ENCODE measurements at regions of chr2 and their contacts with region 1.

Region 1: DNA sequence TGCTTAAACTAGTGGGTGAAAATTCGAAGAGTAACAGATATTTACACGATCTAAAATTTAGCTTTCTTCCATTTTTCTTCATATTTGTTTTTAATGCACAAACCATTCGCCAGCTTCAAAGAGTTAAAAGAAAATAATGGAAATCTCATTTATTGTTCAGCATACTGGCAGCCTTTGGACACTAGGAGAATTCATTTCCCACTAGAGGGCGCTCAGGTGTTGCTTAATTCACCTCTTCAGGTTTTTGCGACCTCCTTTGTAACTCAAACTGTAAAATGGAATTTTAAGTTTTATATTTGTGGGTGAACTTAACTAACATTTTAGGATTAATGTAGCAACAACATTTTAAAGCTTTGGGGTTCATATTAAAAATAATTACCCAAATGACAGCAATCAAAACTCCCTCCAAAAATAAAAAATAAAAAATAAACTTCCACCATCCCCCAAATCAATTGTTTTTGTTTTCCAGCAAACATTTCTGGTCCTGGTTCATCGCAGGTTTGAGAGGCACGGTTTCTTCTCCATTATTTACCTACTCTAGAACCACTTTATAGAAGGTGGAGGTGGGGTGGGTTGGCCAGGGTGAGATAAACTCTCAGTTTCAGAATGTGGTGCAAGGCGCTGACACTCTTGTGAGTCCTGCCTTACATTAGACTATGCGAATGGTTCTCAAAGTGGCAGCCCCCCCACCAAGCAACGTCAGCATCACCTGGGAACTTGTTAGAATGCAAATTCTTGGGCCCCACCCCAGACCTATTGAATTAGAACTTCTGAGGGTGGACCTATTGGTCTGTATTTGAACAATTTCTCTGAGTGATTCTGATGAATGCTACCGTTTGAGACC is 24.7 kb upstream of the PNPT1 start:
- DNase-seq: peak; percentile 59 to 71 (median 68)
- ATAC-seq: no peak
- H3K4me3 ChIP-seq: no peak overlapping the region
- H3K27ac ChIP-seq: no peak overlapping the region
- H3K4me1 ChIP-seq: no peaks in the 10 kb centered on the region
- H3K27me3 ChIP-seq: no peaks in the 10 kb centered on the region
- CTCF ChIP-seq: peak; percentile 32 to 88 (median 77)
- POLR2A ChIP-seq: no peak

Region 2: DNA sequence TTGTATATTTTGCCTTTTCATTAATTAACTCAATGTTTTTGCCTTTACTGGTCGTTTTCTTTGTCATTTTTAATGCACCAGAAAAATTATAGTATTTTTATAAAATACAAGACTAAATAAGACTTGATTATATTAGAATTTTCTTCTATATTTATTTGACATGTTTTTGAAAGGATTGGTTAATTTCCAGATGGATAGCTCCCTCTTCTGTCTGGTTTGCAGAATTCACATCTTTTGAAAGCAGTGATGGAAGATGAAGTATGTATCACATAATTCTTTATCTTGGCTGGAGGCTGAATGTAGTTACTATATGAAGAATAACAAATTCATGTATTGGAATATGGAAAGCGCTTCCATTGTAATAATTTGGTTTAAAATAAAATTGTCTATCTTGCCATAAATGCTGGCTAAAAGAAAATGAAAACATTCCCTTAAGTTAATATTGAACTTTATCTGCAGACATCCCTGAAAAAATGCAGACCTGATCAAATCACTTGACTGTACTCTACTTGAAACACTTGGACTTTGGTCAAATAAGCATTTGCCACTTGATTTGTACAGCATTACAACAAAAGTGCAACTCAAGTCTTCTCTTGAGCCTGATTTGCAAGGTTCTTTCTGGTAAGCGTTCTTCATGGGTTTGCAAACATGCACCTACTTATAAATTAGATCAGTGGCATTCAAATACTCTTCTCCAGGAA is 291.5 kb after region 1 on chr2:
- intact Hi-C with region 1: loop called (anchors 10 kb)
- DNase-seq: no peak
- ATAC-seq: no peak
- H3K4me3 ChIP-seq: no peak overlapping the region
- H3K27ac ChIP-seq: no peak overlapping the region
- H3K4me1 ChIP-seq: peaks cover 16% of the 10 kb centered on the region
- H3K27me3 ChIP-seq: no peaks in the 10 kb centered on the region
- CTCF ChIP-seq: peak in 6 of 7 experiments; percentile 43 to 60 (median 54)
- POLR2A ChIP-seq: no peak

Region 3: DNA sequence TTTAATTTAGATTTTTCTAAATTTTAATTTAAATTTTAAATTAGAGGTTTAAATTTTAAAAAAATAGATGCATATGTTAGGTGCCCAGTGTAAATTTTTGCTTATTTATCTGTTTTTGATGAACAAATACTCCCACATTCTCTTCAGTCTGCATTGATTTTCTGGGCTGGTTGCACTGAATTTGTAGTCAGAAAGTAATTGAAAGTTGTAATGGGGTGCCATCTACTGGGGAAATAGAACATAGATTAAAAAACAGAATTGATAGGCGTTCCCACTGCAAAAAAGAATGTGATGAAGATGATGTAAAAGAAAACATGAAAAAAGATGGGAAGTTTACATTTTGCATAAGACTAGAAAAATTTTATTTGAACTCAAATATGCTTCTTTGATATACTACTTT is 413.8 kb after region 1 on chr2:
- intact Hi-C with region 1: loop called (anchors 10 kb)
- DNase-seq: no peak
- ATAC-seq: peak; percentile 45
- H3K4me3 ChIP-seq: no peak overlapping the region
- H3K27ac ChIP-seq: no peak overlapping the region
- H3K4me1 ChIP-seq: no peaks in the 10 kb centered on the region
- H3K27me3 ChIP-seq: no peaks in the 10 kb centered on the region
- CTCF ChIP-seq: peak; percentile 40 to 83 (median 73)
- POLR2A ChIP-seq: no peak